Common myeloid progenitor, CD34-positive (primary cell): ENCODE measurements at regions of chr16 and their contacts with region 1.

Region 1: GRCh38 chr16:81526935-81527334 is 82.3 kb downstream of the CMIP start:
- DNase-seq: peak in 1 of 3 donors; percentile 48
- H3K4me3 ChIP-seq: peak overlapping the region in 2 of 7 experiments; percentile 6 to 34
- H3K27ac ChIP-seq: peak overlapping the region; percentile 55 to 62
- H3K4me1 ChIP-seq: peaks cover 0 to 16% (median 10%) of the 10 kb centered on the region in 4 experiments
- H3K27me3 ChIP-seq: no peaks in the 10 kb centered on the region

Region 2: GRCh38 chr16:81513204-81514040 is 13.5 kb before region 1 on chr16:
- CTCF ChIA-PET with region 1: interaction called, 10 read pairs
- POLR2A ChIA-PET with region 1: no interaction called
- DNase-seq: peak; percentile 45 to 95 (median 92)
- H3K4me3 ChIP-seq: peak overlapping the region in 3 of 7 experiments; percentile 11 to 54 (median 33)
- H3K27ac ChIP-seq: peak overlapping the region in 1 of 2 experiments; percentile 43
- H3K4me1 ChIP-seq: peaks cover 7 to 38% (median 31%) of the 10 kb centered on the region in 4 experiments
- H3K27me3 ChIP-seq: no peaks in the 10 kb centered on the region

Region 3: GRCh38 chr16:81551151-81551808 is 24.3 kb after region 1 on chr16:
- CTCF ChIA-PET with region 1: no interaction called
- POLR2A ChIA-PET with region 1: no interaction called
- DNase-seq: peak; percentile 10 to 73 (median 62)
- H3K4me3 ChIP-seq: no peak overlapping the region
- H3K27ac ChIP-seq: no peak overlapping the region
- H3K4me1 ChIP-seq: peaks cover 2 to 61% (median 48%) of the 10 kb centered on the region in 4 experiments
- H3K27me3 ChIP-seq: no peaks in the 10 kb centered on the region